WTC11 (cell line): ENCODE measurements at regions of chr19 and their contacts with region 1.

Region 1: DNA sequence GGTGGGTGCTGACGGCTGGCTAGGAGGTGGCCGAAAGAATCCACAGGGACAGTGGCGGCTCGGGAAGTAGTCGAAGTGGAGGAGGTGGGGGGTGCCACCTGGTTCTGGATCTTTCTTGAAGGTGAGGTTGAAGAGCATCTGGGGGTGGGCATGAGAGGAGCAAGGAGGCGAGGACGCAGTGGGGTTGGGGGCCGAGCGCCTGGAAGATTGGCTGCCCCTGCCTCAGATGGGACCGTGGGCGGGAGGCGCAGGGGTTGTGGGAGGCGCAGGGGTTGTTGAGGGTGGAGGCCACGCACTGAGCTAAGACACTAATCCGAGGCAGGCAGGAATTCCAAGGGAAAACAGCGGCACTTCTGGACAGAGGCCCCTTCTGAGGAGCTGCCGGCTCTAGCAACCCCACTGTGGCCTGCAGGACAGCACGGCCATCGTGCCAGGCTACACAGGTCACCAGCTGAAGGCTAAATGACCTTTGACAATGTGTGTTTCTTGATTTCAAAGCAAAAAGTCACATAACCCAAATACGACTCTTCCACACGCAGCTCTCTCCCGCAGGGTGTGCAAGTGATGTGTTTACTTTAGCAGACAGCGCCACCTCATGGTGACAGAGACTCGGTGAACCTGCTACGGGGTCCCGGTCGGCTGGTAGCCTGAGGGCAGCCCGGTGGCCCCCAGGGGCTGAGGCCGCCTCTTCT is 44.1 kb upstream of the RANBP3 start:
- DNase-seq: peak; percentile 93
- ATAC-seq: peak; percentile 89
- H3K4me3 Mint-ChIP-seq: no peak overlapping the region
- H3K27ac Mint-ChIP-seq: no peak overlapping the region
- H3K4me1 Mint-ChIP-seq: 0 out of 2 replicates have a peak, but pooled peaks cover 6% of the 10 kb centered on the region
- H3K27me3 Mint-ChIP-seq: peaks cover 12% of the 10 kb centered on the region
- CTCF ChIP-seq: peak; percentile 80

Region 2: GRCh38 chr19:5904352-5905113 is 117.5 kb before region 1 on chr19 and contains the start of gene VMAC:
- CTCF ChIA-PET with region 1: interaction called, 36 read pairs
- POLR2A ChIA-PET with region 1: no interaction called
- DNase-seq: peak; percentile 100
- ATAC-seq: peak; percentile 89
- H3K4me3 Mint-ChIP-seq: peak within 1 kb of the TSS; percentile 93
- H3K27ac Mint-ChIP-seq: peak within 1 kb of the TSS; percentile 99
- H3K4me1 Mint-ChIP-seq: peaks cover 4% of the 10 kb centered on the region
- H3K27me3 Mint-ChIP-seq: no peaks in the 10 kb centered on the region
- CTCF ChIP-seq: no peak
- total RNA-seq, gene VMAC: 2.5 to 3.3 TPM (median 3.3 TPM) in 3 replicates

Region 3: GRCh38 chr19:5977785-5978605 is 44.0 kb before region 1 on chr19 and contains the start of gene RANBP3:
- CTCF ChIA-PET with region 1: interaction called, 38 read pairs
- POLR2A ChIA-PET with region 1: no interaction called
- DNase-seq: peak; percentile 98
- ATAC-seq: peak; percentile 96
- H3K4me3 Mint-ChIP-seq: peak within 1 kb of the TSS; percentile 96
- H3K27ac Mint-ChIP-seq: peak within 1 kb of the TSS; percentile 93
- H3K4me1 Mint-ChIP-seq: peaks cover 30% of the 10 kb centered on the region
- H3K27me3 Mint-ChIP-seq: peaks cover 5% of the 10 kb centered on the region; the same call in 1 of the 2 replicates
- CTCF ChIP-seq: no peak
- total RNA-seq, gene RANBP3: 74.5 to 76.3 TPM (median 75.6 TPM) in 3 replicates

Region 4: DNA sequence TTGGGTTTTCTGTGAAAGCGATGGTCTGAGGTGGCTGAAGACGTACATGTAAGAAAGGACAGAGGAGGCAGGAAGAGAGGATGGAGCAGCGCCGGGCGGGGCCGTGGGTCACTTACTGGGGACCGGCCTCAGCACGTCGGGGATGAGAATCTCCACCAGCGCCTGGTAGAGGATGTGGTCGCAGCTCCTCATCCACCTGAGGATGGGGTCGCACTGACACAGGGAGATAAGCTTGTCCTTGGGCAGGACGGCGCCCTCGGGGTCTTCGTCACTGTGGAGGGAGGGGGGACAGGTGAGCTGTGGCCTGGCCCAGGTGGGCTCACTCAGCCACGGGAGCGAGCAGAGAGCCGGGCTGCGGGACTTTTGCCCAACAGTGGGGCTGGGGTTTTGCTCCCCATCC is 15.1 kb before region 1 on chr19:
- CTCF ChIA-PET with region 1: interaction called, 40 read pairs
- POLR2A ChIA-PET with region 1: no interaction called
- DNase-seq: no peak
- ATAC-seq: no peak
- H3K4me3 Mint-ChIP-seq: no peak overlapping the region
- H3K27ac Mint-ChIP-seq: no peak overlapping the region
- H3K4me1 Mint-ChIP-seq: no peaks in the 10 kb centered on the region
- H3K27me3 Mint-ChIP-seq: no peaks in the 10 kb centered on the region
- CTCF ChIP-seq: no peak

Region 5: GRCh38 chr19:6092329-6093286 is 70.6 kb after region 1 on chr19:
- CTCF ChIA-PET with region 1: interaction called, 11 read pairs
- POLR2A ChIA-PET with region 1: interaction called, 3 read pairs
- DNase-seq: peak; percentile 68
- ATAC-seq: peak; percentile 93
- H3K4me3 Mint-ChIP-seq: peak overlapping the region; percentile 60
- H3K27ac Mint-ChIP-seq: no peak overlapping the region
- H3K4me1 Mint-ChIP-seq: peaks cover 21% of the 10 kb centered on the region
- H3K27me3 Mint-ChIP-seq: peaks cover 25% of the 10 kb centered on the region
- CTCF ChIP-seq: no peak